ENCODE measurements at regions of chr5 and their contacts with region 1.

Region 1: DNA sequence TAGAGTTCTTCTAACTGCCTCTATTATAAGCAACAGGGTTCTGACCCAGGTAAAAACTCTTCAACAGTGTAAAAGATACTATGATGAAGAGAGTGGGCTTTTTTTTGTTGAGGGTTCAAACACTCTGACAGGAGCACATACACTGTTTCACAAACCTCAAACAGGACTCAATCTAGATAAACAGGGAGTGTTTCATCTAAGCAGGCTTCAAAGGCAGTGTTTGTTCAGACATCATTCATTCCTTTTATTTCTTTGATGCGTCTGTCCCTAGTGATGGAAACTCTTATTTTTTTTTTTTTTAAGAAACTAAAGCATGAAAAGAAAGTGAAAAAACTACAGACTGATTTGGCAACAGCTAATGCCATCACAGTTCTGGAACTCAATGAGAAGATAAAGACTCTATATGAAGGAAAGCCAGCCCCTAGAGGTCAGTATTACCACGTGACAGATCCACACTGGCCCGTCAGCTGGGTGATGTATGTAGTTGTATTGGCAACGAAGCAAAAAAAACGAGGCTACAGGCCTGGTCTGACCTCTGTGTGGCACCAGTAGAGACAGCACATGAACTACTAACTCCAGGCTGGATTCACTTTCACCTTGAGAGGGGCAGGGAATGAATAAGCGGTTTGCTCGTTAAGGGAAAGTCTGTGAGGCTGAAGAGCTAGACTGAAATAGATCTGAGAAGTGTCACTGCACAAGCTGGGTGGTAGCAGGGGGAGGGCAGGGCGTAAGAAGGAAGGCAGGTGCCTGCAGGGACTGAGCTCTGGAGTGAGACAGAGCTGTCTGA is 172.2 kb downstream of the CCDC192 start:
- DNase-seq: peak; percentile 1 to 54
- H3K4me3 ChIP-seq: no peak overlapping the region
- H3K27ac ChIP-seq: no peak overlapping the region
- H3K4me1 ChIP-seq: peaks cover 0 to 2% (median 0%) of the 10 kb centered on the region in 4 experiments; a peak in 1 of 7 replicates
- H3K27me3 ChIP-seq: no peaks in the 10 kb centered on the region
- CTCF ChIP-seq: peak; percentile 20 to 53 (median 47)
- EP300 ChIP-seq: no peak
- POLR2A ChIP-seq: no peak
- RAD21 ChIP-seq: peak; percentile 71 to 74

Region 2: DNA sequence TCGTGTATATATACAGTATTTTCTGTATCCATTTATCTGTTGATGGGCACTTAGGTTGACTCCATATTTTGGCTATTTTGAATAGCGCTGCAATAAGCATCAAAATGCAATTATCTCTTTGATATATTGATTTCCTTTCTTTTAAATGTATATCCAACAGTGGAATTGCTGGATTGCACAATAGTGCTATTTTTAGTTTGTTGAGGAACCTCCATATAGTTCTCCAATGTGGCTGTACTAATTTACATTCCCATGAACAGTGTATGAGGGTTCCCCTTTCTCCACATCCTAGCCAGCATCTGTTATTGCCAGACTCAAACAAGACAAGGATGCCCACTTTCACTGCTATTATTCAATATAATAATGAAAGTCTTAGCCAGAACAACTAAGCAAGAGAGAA is 235.6 kb before region 1 on chr5:
- CTCF ChIA-PET with region 1: no interaction called
- POLR2A ChIA-PET with region 1: no interaction called
- DNase-seq: no peak
- H3K4me3 ChIP-seq: no peak overlapping the region
- H3K27ac ChIP-seq: no peak overlapping the region
- H3K4me1 ChIP-seq: no peaks in the 10 kb centered on the region
- H3K27me3 ChIP-seq: no peaks in the 10 kb centered on the region
- CTCF ChIP-seq: no peak
- EP300 ChIP-seq: no peak
- POLR2A ChIP-seq: no peak
- RAD21 ChIP-seq: no peak

Region 3: GRCh38 chr5:127839072-127839471 is 36.4 kb before region 1 on chr5:
- CTCF ChIA-PET with region 1: no interaction called
- POLR2A ChIA-PET with region 1: no interaction called
- DNase-seq: no peak
- H3K4me3 ChIP-seq: no peak overlapping the region
- H3K27ac ChIP-seq: no peak overlapping the region
- H3K4me1 ChIP-seq: 0 out of 7 replicates have a peak, but pooled peaks cover 0 to 2% (median 0%) of the 10 kb centered on the region in 4 experiments
- H3K27me3 ChIP-seq: no peaks in the 10 kb centered on the region
- CTCF ChIP-seq: no peak
- EP300 ChIP-seq: no peak
- POLR2A ChIP-seq: no peak
- RAD21 ChIP-seq: no peak

Region 4: DNA sequence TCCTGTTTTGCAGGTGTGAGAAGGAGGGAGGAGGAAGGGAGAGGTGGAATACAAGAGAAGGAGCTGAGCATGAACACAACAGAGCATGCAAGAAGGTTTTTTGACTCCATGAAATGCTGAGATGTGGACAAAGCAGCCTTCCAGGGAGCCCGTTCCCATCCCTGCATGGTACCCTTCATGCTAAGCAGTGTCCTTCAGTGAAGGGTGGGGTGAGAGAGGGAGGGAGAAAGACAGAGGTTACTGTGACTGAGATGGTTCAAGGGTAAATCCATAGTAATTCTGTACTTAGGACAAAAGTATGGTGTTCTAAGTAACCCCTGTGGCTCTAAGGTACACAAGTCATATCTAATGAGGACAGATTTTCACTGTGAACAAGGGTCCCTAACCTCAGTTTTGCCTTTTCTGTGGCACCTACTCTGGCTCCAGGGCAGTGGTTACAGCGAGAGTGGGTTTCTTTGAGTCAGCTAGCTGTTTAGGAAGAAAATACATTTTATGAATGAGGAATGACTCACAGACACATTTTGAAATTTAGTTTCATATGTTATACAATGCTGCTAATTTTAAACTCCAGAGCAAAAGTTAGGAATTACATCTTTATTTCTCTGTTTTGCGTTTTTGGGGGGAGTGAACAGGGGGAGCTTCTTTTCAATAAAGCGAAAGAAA is 23.3 kb after region 1 on chr5:
- CTCF ChIA-PET with region 1: interaction called, 17 read pairs
- POLR2A ChIA-PET with region 1: no interaction called
- DNase-seq: no peak
- H3K4me3 ChIP-seq: no peak overlapping the region
- H3K27ac ChIP-seq: no peak overlapping the region
- H3K4me1 ChIP-seq: peaks cover 0 to 3% (median 0%) of the 10 kb centered on the region in 4 experiments; a peak in 1 of 7 replicates
- H3K27me3 ChIP-seq: no peaks in the 10 kb centered on the region
- CTCF ChIP-seq: no peak
- EP300 ChIP-seq: no peak
- POLR2A ChIP-seq: no peak
- RAD21 ChIP-seq: no peak